ENCODE measurements at regions of chr1 and their contacts with region 1.

Region 1: GRCh38 chr1:27057801-27058625 is 45.4 kb upstream of the TENT5B start:
- DNase-seq: no peak
- ATAC-seq: no peak
- H3K4me3 ChIP-seq: no peak overlapping the region
- H3K27ac ChIP-seq: no peak overlapping the region
- H3K4me1 ChIP-seq: peaks cover 5 to 10% of the 10 kb centered on the region in 2 experiments; a peak in 3 of 5 replicates
- H3K27me3 ChIP-seq: no peaks in the 10 kb centered on the region
- CTCF ChIP-seq: no peak
- EP300 ChIP-seq: no peak
- POLR2A ChIP-seq: no peak
- RAD21 ChIP-seq: no peak

Region 2: GRCh38 chr1:26993237-26994019 is 64.6 kb before region 1 on chr1 and contains the start of gene TRNP1:
- CTCF ChIA-PET with region 1: no interaction called
- POLR2A ChIA-PET with region 1: no interaction called
- in situ Hi-C with region 1: no loop called
- intact Hi-C with region 1: no loop called
- DNase-seq: peak; percentile 93 to 99 (median 99)
- ATAC-seq: peak; percentile 88
- H3K4me3 ChIP-seq: peak within 1 kb of the TSS; percentile 52
- H3K27ac ChIP-seq: no peak within 1 kb of the TSS
- H3K4me1 ChIP-seq: peaks cover 10 to 36% of the 10 kb centered on the region in 2 experiments; a peak in 4 of 5 replicates
- H3K27me3 ChIP-seq: peaks cover 9 to 28% of the 10 kb centered on the region in 2 experiments; a peak in 4 of 5 replicates
- CTCF ChIP-seq: 0 out of 6 replicates have a peak, but pooled peaks of 1 of the 3 experiments have one; percentile 17
- EP300 ChIP-seq: no peak
- POLR2A ChIP-seq: peak; percentile 68
- RAD21 ChIP-seq: no peak
- polyA plus RNA-seq, gene TRNP1: 0.03 to 0.14 TPM

Region 3: GRCh38 chr1:27074175-27074780 is 16.3 kb after region 1 on chr1:
- CTCF ChIA-PET with region 1: no interaction called
- POLR2A ChIA-PET with region 1: interaction called, 10 read pairs
- in situ Hi-C with region 1: no loop called
- intact Hi-C with region 1: no loop called
- DNase-seq: peak; percentile 93 to 99 (median 98)
- ATAC-seq: peak; percentile 95
- H3K4me3 ChIP-seq: no peak overlapping the region
- H3K27ac ChIP-seq: peak overlapping the region; percentile 79
- H3K4me1 ChIP-seq: peaks cover 22 to 39% of the 10 kb centered on the region in 2 experiments
- H3K27me3 ChIP-seq: no peaks in the 10 kb centered on the region
- CTCF ChIP-seq: no peak
- EP300 ChIP-seq: peak; percentile 97
- POLR2A ChIP-seq: no peak
- RAD21 ChIP-seq: no peak